Sigmoid colon (tissue), 7 donors: ENCODE measurements at regions of chr19 and their contacts with region 1.

Region 1: DNA sequence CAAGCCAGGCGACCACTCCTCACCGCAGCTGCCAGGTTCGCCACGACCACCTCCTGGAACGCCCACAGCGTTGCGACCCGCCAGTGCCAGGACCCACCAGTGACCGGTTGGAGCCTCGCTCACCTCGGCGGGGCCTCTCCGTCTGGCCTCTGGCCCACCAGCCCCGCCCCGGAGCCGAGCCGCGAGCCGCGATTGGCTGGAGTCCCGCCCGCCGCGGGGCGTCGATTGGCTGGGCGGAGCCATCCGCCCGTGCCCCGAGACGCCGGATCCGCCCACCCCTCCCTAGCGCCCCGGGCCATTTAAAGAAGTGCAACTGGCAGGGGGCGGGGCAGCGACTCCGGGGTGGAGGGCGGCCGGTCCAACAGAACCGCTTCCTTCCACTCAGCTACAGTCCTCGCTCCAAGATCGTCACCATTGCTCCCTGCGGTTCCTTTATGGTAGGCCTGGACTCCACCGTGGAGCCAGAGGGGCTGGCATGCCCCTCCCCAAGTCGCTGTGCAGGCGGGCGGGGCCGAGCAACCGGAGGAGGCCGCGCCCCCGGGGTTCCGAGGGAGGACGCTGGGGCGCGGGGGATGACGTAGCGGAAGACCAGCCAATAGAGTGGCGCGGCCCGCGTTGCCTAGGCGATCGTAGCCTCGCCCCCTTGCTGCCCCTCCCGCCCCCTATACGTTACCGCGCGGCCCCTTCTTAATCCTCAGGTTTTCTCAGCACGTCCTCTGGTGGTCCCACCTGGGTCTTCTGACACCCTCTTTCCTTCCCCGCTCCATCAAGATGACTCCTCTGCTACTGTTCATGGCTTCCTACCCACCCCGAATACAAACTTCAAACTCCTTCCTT is at the start of gene SERTAD3:
- DNase-seq: peak; percentile 99
- H3K4me3 ChIP-seq: peak within 1 kb of the TSS; percentile 82 to 99 (median 96)
- H3K27ac ChIP-seq: peak within 1 kb of the TSS; percentile 93 to 100 (median 100)
- H3K4me1 ChIP-seq: peaks cover 0 to 40% (median 37%) of the 10 kb centered on the region in 4 donors
- H3K27me3 ChIP-seq: no peaks in the 10 kb centered on the region
- CTCF ChIP-seq: peak in 1 of 4 experiments; percentile 26
- EP300 ChIP-seq: no peak
- POLR2A ChIP-seq: peak; percentile 98 to 99
- total RNA-seq, gene SERTAD3: 15.5 to 34.2 (median 26.0) TPM

Region 2: DNA sequence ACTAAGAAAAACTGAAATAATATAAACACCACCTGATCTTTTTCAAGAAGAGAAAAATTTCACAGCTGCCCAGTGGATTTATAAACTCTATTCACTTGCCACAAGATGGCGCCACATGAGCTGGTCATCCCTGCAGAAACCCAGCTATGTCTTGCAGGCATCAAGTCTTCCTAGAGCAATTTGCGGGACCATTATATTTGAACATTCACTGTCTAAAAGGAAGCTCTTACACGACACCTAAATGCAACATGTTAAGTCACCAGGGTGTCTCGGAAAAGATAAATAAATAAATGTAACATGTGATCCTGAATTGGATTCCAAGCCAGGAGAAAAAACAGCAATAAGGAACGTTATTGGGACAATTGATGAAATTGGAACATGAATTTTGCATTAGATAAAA is 139.0 kb before region 1 on chr19:
- intact Hi-C with region 1: loop called (anchors 5 kb)
- DNase-seq: peak; percentile 89
- H3K4me3 ChIP-seq: no peak overlapping the region
- H3K27ac ChIP-seq: no peak overlapping the region
- H3K4me1 ChIP-seq: peaks cover 0 to 3% (median 0%) of the 10 kb centered on the region in 4 donors
- H3K27me3 ChIP-seq: no peaks in the 10 kb centered on the region
- CTCF ChIP-seq: peak; percentile 40 to 62 (median 58)
- EP300 ChIP-seq: no peak
- POLR2A ChIP-seq: no peak

Region 3: GRCh38 chr19:40413291-40413845 is 31.0 kb before region 1 on chr19 and contains the start of gene PRX:
- intact Hi-C with region 1: loop called (anchors 5 kb)
- DNase-seq: no peak
- H3K4me3 ChIP-seq: no peak within 1 kb of the TSS
- H3K27ac ChIP-seq: no peak within 1 kb of the TSS
- H3K4me1 ChIP-seq: peaks cover 0 to 10% (median 5%) of the 10 kb centered on the region in 4 donors
- H3K27me3 ChIP-seq: no peaks in the 10 kb centered on the region
- CTCF ChIP-seq: no peak
- EP300 ChIP-seq: no peak
- POLR2A ChIP-seq: no peak
- total RNA-seq, gene PRX: 3.5 to 8.6 (median 5.0) TPM

Region 4: GRCh38 chr19:40433391-40434216 is 10.8 kb before region 1 on chr19:
- intact Hi-C with region 1: loop called (anchors 1 kb)
- DNase-seq: peak; percentile 97
- H3K4me3 ChIP-seq: peak overlapping the region; percentile 23 to 53 (median 50)
- H3K27ac ChIP-seq: peak overlapping the region; percentile 93 to 97 (median 95)
- H3K4me1 ChIP-seq: peaks cover 0 to 38% (median 22%) of the 10 kb centered on the region in 4 donors
- H3K27me3 ChIP-seq: no peaks in the 10 kb centered on the region
- CTCF ChIP-seq: no peak
- EP300 ChIP-seq: no peak
- POLR2A ChIP-seq: no peak

Region 5: GRCh38 chr19:40603389-40604135 is 159.2 kb after region 1 on chr19:
- intact Hi-C with region 1: loop called (anchors 5 kb)
- DNase-seq: peak; percentile 99
- H3K4me3 ChIP-seq: peak overlapping the region; percentile 37 to 61 (median 53)
- H3K27ac ChIP-seq: peak overlapping the region; percentile 71 to 85 (median 84)
- H3K4me1 ChIP-seq: peaks cover 0 to 73% (median 69%) of the 10 kb centered on the region in 4 donors
- H3K27me3 ChIP-seq: peaks cover 3 to 18% (median 11%) of the 10 kb centered on the region in 3 donors
- CTCF ChIP-seq: no peak
- EP300 ChIP-seq: no peak
- POLR2A ChIP-seq: peak in 1 of 2 donors; percentile 30

Region 6: DNA sequence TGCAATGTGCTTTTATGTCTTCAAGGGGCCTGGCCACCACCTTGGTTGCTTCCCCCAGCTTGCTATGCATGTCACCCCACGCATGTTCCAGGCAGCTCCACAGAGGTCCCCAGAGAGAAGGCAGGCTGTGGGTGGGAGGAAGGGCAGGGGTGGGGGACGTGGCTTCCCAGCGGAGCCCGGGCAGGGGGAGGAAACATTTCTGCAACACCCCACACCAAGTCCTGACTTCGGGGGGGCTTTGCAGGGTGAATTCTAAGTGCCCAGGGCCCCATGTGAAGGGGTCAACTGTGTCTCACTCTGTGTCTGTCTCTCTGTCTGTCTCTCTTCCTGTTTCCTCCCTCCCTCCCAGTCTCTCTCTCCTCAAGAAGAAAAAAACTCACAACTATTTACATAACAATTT is 196.3 kb after region 1 on chr19:
- intact Hi-C with region 1: no loop called
- DNase-seq: peak; percentile 71
- H3K4me3 ChIP-seq: no peak overlapping the region
- H3K27ac ChIP-seq: peak overlapping the region; percentile 46 to 70 (median 56)
- H3K4me1 ChIP-seq: peaks cover 0 to 23% (median 17%) of the 10 kb centered on the region in 4 donors
- H3K27me3 ChIP-seq: no peaks in the 10 kb centered on the region
- CTCF ChIP-seq: no peak
- EP300 ChIP-seq: no peak
- POLR2A ChIP-seq: no peak